Endothelial cell of umbilical vein (primary cell): ENCODE measurements at regions of chr1 and their contacts with region 1.

Region 1: DNA sequence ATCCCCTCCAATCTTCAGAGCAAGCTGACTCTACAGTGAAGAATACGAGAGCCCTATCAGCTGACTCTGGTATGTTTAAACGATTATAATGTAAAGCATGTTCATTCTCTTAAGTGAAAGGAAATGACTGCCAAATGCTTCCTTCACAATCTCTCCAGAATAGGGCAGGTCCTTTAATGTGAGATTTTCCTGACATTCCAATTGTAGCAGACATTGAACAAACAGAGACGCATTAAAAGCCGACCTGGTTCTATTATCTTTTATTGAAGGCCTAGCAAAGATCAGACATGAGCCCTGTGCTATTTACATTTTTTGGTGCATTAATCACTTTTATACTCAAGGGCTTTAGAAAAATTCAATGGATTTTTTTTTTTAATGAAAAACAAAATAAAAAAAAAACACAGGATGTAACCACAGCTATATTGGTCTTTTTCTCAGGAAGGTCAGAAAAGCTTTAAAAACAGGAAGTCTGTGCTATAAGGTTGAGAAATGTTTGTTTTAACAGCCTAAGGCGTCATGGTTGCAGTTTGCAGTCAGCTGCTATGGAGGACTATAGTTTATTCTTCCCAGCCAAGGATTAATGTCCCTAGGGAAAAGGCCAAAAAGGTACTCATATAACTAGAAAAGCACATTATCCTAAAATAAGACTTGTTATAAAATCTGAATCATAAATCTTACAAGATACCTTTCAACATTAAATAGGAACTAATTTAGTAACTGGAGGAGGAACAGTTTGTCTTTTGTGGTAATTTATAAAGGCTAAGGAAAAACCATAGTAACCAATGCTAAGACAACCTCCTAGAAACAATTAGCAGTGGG is 104.8 kb downstream of the RERE start:
- DNase-seq: peak; percentile 96
- H3K4me3 ChIP-seq: peak overlapping the region in 1 of 3 experiments; percentile 30
- H3K27ac ChIP-seq: peak overlapping the region; percentile 94
- H3K4me1 ChIP-seq: peaks cover 33% of the 10 kb centered on the region
- H3K27me3 ChIP-seq: no peaks in the 10 kb centered on the region
- CTCF ChIP-seq: no peak
- POLR2A ChIP-seq: no peak

Region 2: DNA sequence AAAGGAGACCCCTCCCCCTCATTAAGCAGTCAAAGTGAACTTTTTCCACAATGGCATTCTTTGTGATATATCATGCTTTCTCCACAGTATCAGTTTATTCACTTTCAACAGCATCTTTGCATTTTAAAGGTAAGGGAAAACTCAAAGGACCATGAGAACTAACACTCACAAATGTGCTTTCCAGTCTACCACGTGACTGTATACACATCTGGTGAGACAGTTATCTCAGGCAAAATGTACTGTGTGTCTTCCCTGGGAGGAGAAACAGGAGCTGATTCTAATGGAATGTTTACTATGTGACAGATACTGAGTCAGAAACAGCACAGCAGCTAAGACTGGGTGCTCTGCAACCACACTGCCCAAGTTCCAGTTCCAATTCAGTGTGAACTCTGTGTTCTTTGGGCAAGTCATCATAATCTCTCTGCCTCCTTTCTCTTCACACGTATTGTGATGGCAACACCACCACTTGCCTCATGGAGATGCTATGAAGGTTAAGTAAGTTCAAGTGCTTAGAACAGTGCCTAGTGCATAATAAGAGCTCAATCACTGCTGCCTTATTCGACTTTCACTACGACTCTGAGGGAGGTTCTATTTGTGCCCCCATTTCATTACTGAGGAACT is 315.7 kb before region 1 on chr1:
- CTCF ChIA-PET with region 1: no interaction called
- POLR2A ChIA-PET with region 1: no interaction called
- dilution Hi-C with region 1: no loop called
- intact Hi-C with region 1: loop called (anchors 1 kb)
- DNase-seq: peak; percentile 71
- H3K4me3 ChIP-seq: no peak overlapping the region
- H3K27ac ChIP-seq: peak overlapping the region; percentile 62
- H3K4me1 ChIP-seq: peaks cover 49% of the 10 kb centered on the region
- H3K27me3 ChIP-seq: no peaks in the 10 kb centered on the region
- CTCF ChIP-seq: no peak
- POLR2A ChIP-seq: no peak

Region 3: GRCh38 chr1:8600336-8600735 is 112.3 kb before region 1 on chr1:
- CTCF ChIA-PET with region 1: no interaction called
- POLR2A ChIA-PET with region 1: no interaction called
- dilution Hi-C with region 1: no loop called
- intact Hi-C with region 1: loop called (anchors 1 kb)
- DNase-seq: peak; percentile 94
- H3K4me3 ChIP-seq: no peak overlapping the region
- H3K27ac ChIP-seq: peak overlapping the region; percentile 84
- H3K4me1 ChIP-seq: peaks cover 50% of the 10 kb centered on the region
- H3K27me3 ChIP-seq: no peaks in the 10 kb centered on the region
- CTCF ChIP-seq: no peak
- POLR2A ChIP-seq: no peak

Region 4: DNA sequence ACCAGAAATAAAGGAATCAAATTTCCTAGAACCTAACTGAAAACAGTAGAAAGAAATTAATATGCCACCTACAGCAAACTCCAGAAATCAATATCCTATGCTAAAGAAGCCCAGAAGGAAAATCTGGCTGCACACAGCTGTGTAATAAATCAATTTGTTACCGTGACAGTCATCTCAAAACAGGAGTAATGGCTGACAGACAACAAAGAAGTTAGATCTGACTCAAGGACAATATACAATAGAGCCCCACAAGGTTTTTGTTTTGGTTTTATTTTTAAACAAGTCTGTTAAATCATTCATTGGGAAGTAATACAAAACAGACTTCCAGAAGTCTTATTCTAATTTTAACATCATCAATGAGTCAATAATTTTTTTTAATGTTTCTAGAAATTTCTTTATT is 63.6 kb before region 1 on chr1:
- CTCF ChIA-PET with region 1: interaction called, 3 read pairs
- POLR2A ChIA-PET with region 1: no interaction called
- dilution Hi-C with region 1: no loop called
- intact Hi-C with region 1: loop called (anchors 1 kb)
- DNase-seq: peak; percentile 85
- H3K4me3 ChIP-seq: no peak overlapping the region
- H3K27ac ChIP-seq: peak overlapping the region; percentile 33
- H3K4me1 ChIP-seq: peaks cover 35% of the 10 kb centered on the region
- H3K27me3 ChIP-seq: no peaks in the 10 kb centered on the region
- CTCF ChIP-seq: no peak
- POLR2A ChIP-seq: no peak

Region 5: DNA sequence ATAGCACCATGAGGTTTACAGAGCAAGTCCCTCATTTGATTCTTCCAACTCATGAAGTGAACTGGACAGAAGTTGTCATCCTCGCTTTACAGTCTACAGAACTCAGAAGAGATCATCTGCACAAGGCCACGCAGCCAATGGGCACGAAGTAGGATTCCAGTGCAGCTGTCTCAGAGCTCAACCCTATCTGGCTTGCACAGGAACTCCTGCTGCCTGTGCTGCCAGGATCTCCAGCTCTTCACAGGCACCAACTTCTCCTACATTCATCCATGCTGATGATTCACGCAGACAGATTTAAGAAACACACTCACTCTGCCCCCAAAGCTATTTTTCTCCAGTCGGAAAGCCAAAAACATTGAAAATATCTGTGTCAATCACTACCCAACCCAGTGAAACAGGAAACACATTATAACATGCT is 52.2 kb before region 1 on chr1:
- CTCF ChIA-PET with region 1: no interaction called
- POLR2A ChIA-PET with region 1: no interaction called
- dilution Hi-C with region 1: no loop called
- intact Hi-C with region 1: loop called (anchors 2 kb)
- DNase-seq: peak; percentile 92
- H3K4me3 ChIP-seq: no peak overlapping the region
- H3K27ac ChIP-seq: peak overlapping the region; percentile 70
- H3K4me1 ChIP-seq: peaks cover 34% of the 10 kb centered on the region
- H3K27me3 ChIP-seq: no peaks in the 10 kb centered on the region
- CTCF ChIP-seq: no peak
- POLR2A ChIP-seq: no peak